WTC11 (cell line): ENCODE measurements at regions of chr12 and their contacts with region 1.

Region 1: DNA sequence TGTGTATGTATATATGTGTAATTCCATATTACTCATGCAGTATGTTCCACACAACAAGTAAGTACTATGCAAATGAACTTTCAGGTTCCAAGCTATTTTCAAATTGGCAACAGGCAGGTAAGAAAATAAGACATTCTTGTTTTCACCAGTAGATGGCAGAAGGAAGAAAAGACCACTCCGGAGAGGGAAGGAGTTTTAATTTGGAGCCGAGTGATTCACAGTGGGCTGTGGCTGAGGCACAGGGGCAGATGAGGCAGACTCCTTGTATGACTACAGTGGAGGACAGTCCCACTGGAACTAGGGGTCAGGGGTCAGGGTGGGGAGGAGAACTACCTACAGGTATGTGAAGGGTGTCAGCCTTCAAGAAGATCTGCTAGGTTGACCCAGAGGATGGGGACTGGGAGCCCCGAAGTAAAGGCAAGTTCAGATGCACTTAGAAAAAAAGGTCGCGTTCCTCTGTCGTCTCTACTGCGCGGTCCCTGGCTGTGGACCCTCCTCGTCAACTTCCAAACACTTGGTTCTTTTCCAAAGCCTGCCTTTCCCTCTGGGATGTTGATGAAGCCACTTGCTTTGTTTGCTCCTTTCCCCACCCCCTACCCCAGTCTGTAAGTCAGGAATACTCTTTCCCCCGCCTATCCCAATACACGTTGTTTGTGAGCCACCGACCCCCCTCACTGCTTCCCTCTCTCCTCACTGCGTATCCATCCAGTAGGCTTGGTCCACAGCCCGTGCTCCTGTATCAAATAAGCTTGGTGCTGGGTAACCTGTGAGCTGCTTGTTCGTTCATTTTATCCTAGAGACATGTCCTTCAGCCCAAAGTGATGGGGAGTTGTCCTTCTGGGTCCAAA is 24.1 kb downstream of the DDX47 start:
- DNase-seq: peak; percentile 16
- ATAC-seq: peak; percentile 87
- H3K4me3 Mint-ChIP-seq: no peak overlapping the region
- H3K27ac Mint-ChIP-seq: no peak overlapping the region
- H3K4me1 Mint-ChIP-seq: peaks cover 9% of the 10 kb centered on the region
- H3K27me3 Mint-ChIP-seq: no peaks in the 10 kb centered on the region
- CTCF ChIP-seq: no peak

Region 2: GRCh38 chr12:12813120-12814101 is 23.8 kb before region 1 on chr12 and contains the start of gene DDX47:
- CTCF ChIA-PET with region 1: interaction called, 10 read pairs
- POLR2A ChIA-PET with region 1: no interaction called
- DNase-seq: peak; percentile 98
- ATAC-seq: peak; percentile 97
- H3K4me3 Mint-ChIP-seq: peak within 1 kb of the TSS; percentile 100
- H3K27ac Mint-ChIP-seq: peak within 1 kb of the TSS; percentile 98
- H3K4me1 Mint-ChIP-seq: peaks cover 25% of the 10 kb centered on the region
- H3K27me3 Mint-ChIP-seq: no peaks in the 10 kb centered on the region
- CTCF ChIP-seq: peak; percentile 89
- total RNA-seq, gene DDX47: 59.2 to 64.8 TPM (median 59.2 TPM) in 3 replicates

Region 3: GRCh38 chr12:12859690-12860089 is 22.4 kb after region 1 on chr12:
- CTCF ChIA-PET with region 1: interaction called, 12 read pairs
- POLR2A ChIA-PET with region 1: interaction called, 3 read pairs
- DNase-seq: no peak
- ATAC-seq: no peak
- H3K4me3 Mint-ChIP-seq: no peak overlapping the region
- H3K27ac Mint-ChIP-seq: no peak overlapping the region
- H3K4me1 Mint-ChIP-seq: peaks cover 11% of the 10 kb centered on the region
- H3K27me3 Mint-ChIP-seq: no peaks in the 10 kb centered on the region; the same call in 1 of the 2 replicates
- CTCF ChIP-seq: no peak

Region 4: GRCh38 chr12:12881151-12881894 is 44.1 kb after region 1 on chr12:
- CTCF ChIA-PET with region 1: interaction called, 16 read pairs
- POLR2A ChIA-PET with region 1: no interaction called
- DNase-seq: no peak
- ATAC-seq: no peak
- H3K4me3 Mint-ChIP-seq: no peak overlapping the region
- H3K27ac Mint-ChIP-seq: no peak overlapping the region
- H3K4me1 Mint-ChIP-seq: peaks cover 22% of the 10 kb centered on the region
- H3K27me3 Mint-ChIP-seq: peaks cover 26% of the 10 kb centered on the region
- CTCF ChIP-seq: no peak

Region 5: DNA sequence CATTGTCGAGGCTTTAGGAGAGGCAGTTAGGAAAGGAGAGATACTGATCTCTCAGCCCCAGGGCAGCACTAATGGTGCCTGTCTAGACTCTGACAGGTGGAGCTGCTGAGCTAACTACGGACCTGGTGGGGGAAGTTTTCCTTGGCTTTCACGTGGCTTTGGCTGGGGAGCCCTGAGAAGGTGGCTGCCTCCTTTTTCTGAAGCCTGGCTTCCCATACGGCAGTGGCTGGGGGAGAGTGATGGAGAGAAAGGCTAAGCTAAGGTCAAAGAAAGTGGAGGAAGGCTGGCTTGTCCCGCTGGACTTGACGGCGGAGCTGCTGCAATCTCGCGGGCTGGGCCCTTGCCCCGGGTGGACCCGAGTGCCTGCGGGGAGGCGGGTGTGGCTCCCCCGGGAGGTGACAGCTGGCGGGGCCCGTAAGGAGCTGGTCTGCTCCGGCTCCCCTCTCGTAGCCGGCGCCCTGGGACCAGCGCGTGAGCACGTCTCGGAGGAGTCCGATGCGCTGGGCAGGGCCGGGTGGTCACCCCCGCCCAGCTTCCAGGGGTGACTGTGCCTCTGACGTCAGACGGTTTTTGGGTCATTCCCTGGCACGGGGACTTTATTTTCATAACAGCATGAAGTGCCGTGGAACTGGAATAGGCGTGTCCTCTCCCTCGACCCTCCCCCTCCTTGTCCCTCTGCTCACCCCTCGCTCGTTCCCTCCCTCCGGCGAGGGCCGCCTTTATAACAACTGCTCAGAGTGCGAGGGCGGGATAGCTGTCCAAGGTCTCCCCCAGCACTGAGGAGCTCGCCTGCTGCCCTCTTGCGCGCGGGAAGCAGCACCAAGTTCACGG is 53.8 kb after region 1 on chr12 and contains the start of gene GPRC5A:
- CTCF ChIA-PET with region 1: interaction called, 16 read pairs
- POLR2A ChIA-PET with region 1: interaction called, 3 read pairs
- DNase-seq: peak; percentile 55
- ATAC-seq: peak; percentile 80
- H3K4me3 Mint-ChIP-seq: peak within 1 kb of the TSS; percentile 84
- H3K27ac Mint-ChIP-seq: no peak within 1 kb of the TSS
- H3K4me1 Mint-ChIP-seq: peaks cover 32% of the 10 kb centered on the region
- H3K27me3 Mint-ChIP-seq: peaks cover 69% of the 10 kb centered on the region
- CTCF ChIP-seq: no peak
- total RNA-seq, gene GPRC5A: 1.1 to 1.3 TPM (median 1.3 TPM) in 3 replicates

Region 6: GRCh38 chr12:12916135-12916944 is 79.1 kb after region 1 on chr12:
- CTCF ChIA-PET with region 1: interaction called, 20 read pairs
- POLR2A ChIA-PET with region 1: no interaction called
- DNase-seq: peak; percentile 90
- ATAC-seq: peak; percentile 88
- H3K4me3 Mint-ChIP-seq: no peak overlapping the region
- H3K27ac Mint-ChIP-seq: no peak overlapping the region
- H3K4me1 Mint-ChIP-seq: peaks cover 27% of the 10 kb centered on the region
- H3K27me3 Mint-ChIP-seq: peaks cover 3% of the 10 kb centered on the region
- CTCF ChIP-seq: peak; percentile 98

Region 7: GRCh38 chr12:12975322-12976077 is 138.3 kb after region 1 on chr12:
- CTCF ChIA-PET with region 1: interaction called, 20 read pairs
- POLR2A ChIA-PET with region 1: no interaction called
- DNase-seq: peak; percentile 62
- ATAC-seq: peak; percentile 99
- H3K4me3 Mint-ChIP-seq: no peak overlapping the region
- H3K27ac Mint-ChIP-seq: no peak overlapping the region
- H3K4me1 Mint-ChIP-seq: no peaks in the 10 kb centered on the region
- H3K27me3 Mint-ChIP-seq: peaks cover 3% of the 10 kb centered on the region; the same call in 1 of the 2 replicates
- CTCF ChIP-seq: no peak